Esophagus squamous epithelium (tissue), 5 donors: ENCODE measurements at regions of chr1 and their contacts with region 1.

Region 1: DNA sequence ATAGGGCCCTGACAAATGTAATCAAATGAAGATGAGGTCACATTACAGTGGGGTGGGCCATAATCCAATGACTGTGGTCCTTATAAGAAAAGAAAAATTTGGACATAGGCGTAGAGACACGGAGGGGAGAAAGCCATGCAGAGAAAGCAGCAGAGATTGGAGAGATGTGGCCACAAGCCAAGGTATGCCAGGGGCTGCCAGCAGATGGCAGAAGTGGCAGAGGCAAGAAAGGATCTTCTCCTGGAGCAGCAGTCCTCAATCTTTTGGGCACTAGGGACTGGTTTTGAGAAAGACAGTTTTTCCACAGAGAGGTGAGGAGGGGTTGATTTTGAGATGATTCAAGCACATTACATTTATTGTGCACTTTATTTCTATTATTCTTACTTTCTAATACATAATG is 355.1 kb downstream of the NPHP4 start:
- DNase-seq: no peak
- H3K4me3 ChIP-seq: no peak overlapping the region
- H3K27ac ChIP-seq: no peak overlapping the region
- H3K4me1 ChIP-seq: no peaks in the 10 kb centered on the region
- H3K27me3 ChIP-seq: peaks cover 0 to 66% (median 0%) of the 10 kb centered on the region in 4 donors
- CTCF ChIP-seq: peak in 5 of 6 experiments; percentile 38 to 82 (median 59)
- POLR2A ChIP-seq: no peak

Region 2: GRCh38 chr1:5394111-5394510 is 243.1 kb before region 1 on chr1:
- intact Hi-C with region 1: no loop called
- DNase-seq: no peak
- H3K4me3 ChIP-seq: no peak overlapping the region
- H3K27ac ChIP-seq: no peak overlapping the region
- H3K4me1 ChIP-seq: no peaks in the 10 kb centered on the region
- H3K27me3 ChIP-seq: peaks cover 0 to 71% (median 0%) of the 10 kb centered on the region in 4 donors
- CTCF ChIP-seq: no peak
- POLR2A ChIP-seq: no peak

Region 3: DNA sequence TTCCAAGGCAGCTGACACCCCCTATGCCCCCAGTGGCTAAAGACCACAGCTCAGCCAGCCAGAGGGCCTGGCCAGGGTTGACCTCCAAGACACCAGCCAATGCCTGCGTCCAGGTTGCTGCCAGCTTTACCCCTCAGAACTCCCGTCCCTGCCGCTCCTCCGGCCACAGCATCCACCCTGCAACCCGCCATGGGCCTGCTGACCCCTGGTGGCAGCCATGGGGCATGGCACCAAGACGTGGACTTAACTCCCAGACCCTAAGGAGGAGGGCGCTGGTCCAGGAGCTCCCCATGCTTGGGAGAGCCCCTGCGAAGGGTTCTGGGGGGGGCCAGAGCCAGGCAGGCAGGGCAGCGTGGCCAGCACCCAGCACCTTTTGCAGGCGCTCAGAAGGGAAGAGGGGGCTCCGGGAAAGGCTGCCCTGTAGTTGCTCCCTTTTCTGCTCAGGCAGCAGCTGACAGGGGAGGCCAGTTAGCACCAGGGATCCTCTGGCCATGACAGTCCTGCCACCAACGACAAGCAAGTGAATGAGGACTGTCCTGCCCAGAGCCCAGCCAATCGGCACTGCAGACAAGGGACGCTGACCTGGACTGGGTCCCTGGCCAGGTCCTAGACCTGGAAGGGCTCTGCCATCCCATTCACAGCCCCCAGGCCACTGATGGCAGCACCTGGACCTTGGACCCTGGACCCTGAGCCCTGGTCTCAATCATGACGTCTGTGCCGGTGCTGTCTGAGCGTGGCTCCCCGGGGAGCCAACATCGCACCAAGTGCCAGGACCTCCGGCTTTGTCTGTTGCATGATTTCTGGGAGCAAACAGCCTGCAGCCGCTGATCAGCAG is 108.8 kb after region 1 on chr1:
- intact Hi-C with region 1: loop called (anchors 5 kb)
- DNase-seq: no peak
- H3K4me3 ChIP-seq: no peak overlapping the region
- H3K27ac ChIP-seq: no peak overlapping the region
- H3K4me1 ChIP-seq: peaks cover 0 to 12% (median 0%) of the 10 kb centered on the region in 3 donors
- H3K27me3 ChIP-seq: peaks cover 0 to 91% (median 4%) of the 10 kb centered on the region in 4 donors
- CTCF ChIP-seq: peak; percentile 75 to 95 (median 90)
- POLR2A ChIP-seq: no peak

Region 4: DNA sequence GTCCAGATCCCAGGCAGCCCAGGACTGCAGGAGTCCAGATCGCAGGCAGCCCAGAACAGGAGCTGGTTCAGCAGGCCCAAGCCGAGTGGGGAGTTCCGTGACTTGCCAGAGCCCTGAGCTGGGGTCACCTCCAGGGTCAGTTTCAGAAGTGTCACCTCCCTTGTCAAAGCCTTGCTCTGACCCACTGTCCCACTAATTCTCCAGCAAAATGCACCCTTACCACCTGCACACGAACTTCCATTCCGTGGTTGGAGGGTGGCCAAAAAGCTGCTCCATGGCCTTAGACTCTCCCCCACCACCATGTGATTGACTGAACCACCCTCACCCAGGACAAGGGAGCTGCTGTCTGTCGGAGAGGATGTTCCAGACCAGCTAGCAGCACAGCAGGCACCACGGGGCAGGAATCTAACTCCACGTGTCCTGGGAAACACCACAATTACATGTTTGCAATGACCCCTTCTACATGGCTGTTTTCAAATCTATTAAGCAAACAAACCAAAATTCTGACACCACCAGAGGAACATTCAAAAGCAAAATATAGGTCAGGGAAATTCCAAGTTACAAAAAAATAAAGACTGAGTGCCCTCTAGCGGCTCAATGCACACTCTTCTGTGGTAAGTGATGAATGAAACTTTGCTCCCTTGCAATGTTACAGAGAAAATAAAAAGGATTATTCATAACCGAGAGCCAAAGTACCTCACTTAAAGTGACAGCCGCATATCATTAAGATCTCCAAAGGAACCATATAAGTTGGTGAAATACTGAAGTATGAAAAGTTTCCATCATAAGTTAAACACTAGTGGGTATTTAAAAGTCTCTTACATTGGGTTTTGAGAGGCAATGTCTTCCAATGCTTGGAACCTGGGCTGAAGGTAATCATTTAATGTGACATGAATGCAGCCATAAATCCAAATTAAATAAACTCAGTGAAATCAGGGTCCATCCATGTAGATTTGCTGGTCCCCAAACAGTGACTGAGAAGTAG is 278.7 kb after region 1 on chr1:
- intact Hi-C with region 1: loop called (anchors 10 kb)
- DNase-seq: no peak
- H3K4me3 ChIP-seq: no peak overlapping the region
- H3K27ac ChIP-seq: no peak overlapping the region
- H3K4me1 ChIP-seq: peaks cover 0 to 5% (median 0%) of the 10 kb centered on the region in 3 donors
- H3K27me3 ChIP-seq: no peaks in the 10 kb centered on the region
- CTCF ChIP-seq: peak; percentile 31 to 60 (median 54)
- POLR2A ChIP-seq: no peak